ENCODE measurements at regions of chr20 and their contacts with region 1.

Region 1: GRCh38 chr20:23050847-23051631 is 1.6 kb upstream of the THBD start:
- DNase-seq: peak; percentile 89

Region 2: GRCh38 chr20:22691369-22692118 is 359.5 kb before region 1 on chr20:
- intact Hi-C with region 1: loop called (anchors 2 kb)
- DNase-seq: peak; percentile 91

Region 3: GRCh38 chr20:22861229-22861980 is 189.6 kb before region 1 on chr20:
- intact Hi-C with region 1: loop called (anchors 2 kb)
- DNase-seq: no peak

Region 4: GRCh38 chr20:22949331-22950109 is 101.5 kb before region 1 on chr20:
- intact Hi-C with region 1: no loop called
- DNase-seq: no peak

Region 5: DNA sequence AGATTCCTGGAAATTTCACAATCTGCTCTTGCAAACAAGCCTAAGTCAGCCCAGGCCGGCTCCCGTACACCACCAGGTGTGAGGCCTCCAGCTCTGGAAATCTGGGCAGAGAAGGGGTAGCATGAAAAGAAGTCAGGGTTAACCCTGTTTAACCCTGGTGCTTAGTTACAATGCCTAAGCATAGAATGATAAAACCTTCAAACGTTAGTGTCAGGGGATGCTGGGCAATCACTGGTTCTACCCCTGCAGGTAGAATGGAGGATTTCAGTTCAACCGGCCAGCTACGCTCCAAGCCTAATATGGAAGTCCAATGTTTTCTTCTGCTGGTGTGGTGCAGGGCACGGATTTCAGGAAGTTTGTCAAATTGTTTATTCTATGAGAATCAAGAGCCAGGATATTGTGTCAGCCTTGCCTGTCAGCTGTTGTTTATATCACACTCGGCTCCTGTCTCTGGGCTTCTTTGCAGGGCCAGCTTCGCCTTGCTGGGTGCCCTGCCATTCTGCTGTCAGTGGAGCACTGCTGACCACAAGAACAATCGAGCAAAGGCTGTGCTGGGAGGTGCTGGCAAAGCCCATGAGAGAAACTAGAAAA is 55.3 kb after region 1 on chr20:
- intact Hi-C with region 1: no loop called
- DNase-seq: no peak

Region 6: GRCh38 chr20:23161968-23162696 is 111.1 kb after region 1 on chr20:
- intact Hi-C with region 1: no loop called
- DNase-seq: peak; percentile 93

Region 7: GRCh38 chr20:23200918-23201317 is 149.9 kb after region 1 on chr20:
- intact Hi-C with region 1: loop called (anchors 5 kb)
- DNase-seq: no peak

Region 8: GRCh38 chr20:23235173-23236027 is 184.4 kb after region 1 on chr20:
- intact Hi-C with region 1: loop called (anchors 2 kb)
- DNase-seq: peak; percentile 87

Region 9: GRCh38 chr20:23350196-23350903 is 299.3 kb after region 1 on chr20 and contains the start of gene NXT1:
- intact Hi-C with region 1: loop called (anchors 10 kb)
- DNase-seq: peak; percentile 99
- total RNA-seq, gene NXT1: 10.6 TPM